ENCODE measurements at regions of chr11 and their contacts with region 1.

Region 1: GRCh38 chr11:72144807-72145560 is 9.5 kb downstream of the FOLR3 start:
- DNase-seq: no peak
- ATAC-seq: no peak
- H3K4me3 ChIP-seq: no peak overlapping the region
- H3K4me3 Mint-ChIP-seq: no peak overlapping the region
- H3K27ac ChIP-seq: no peak overlapping the region
- H3K27ac Mint-ChIP-seq: no peak overlapping the region
- H3K4me1 ChIP-seq: no peaks in the 10 kb centered on the region
- H3K4me1 Mint-ChIP-seq: peaks cover 0 to 18% (median 3%) of the 10 kb centered on the region in 7 donors
- H3K27me3 ChIP-seq: no peaks in the 10 kb centered on the region
- H3K27me3 Mint-ChIP-seq: peaks cover 1 to 15% (median 4%) of the 10 kb centered on the region in 5 donors

Region 2: GRCh38 chr11:72155751-72156150 is 10.8 kb after region 1 on chr11:
- CTCF ChIA-PET with region 1: interaction called, 12 read pairs
- POLR2A ChIA-PET with region 1: no interaction called
- intact Hi-C with region 1: no loop called
- DNase-seq: no peak
- ATAC-seq: no peak
- H3K4me3 ChIP-seq: no peak overlapping the region
- H3K4me3 Mint-ChIP-seq: no peak overlapping the region
- H3K27ac ChIP-seq: no peak overlapping the region
- H3K27ac Mint-ChIP-seq: no peak overlapping the region
- H3K4me1 ChIP-seq: no peaks in the 10 kb centered on the region
- H3K4me1 Mint-ChIP-seq: no peaks in the 10 kb centered on the region
- H3K27me3 ChIP-seq: no peaks in the 10 kb centered on the region
- H3K27me3 Mint-ChIP-seq: peaks cover 6 to 26% (median 15%) of the 10 kb centered on the region in 5 donors

Measured in naive thymus-derived CD4-positive, alpha-beta T cell (primary cell).